ENCODE measurements at regions of chr19 and their contacts with region 1.

Region 1: DNA sequence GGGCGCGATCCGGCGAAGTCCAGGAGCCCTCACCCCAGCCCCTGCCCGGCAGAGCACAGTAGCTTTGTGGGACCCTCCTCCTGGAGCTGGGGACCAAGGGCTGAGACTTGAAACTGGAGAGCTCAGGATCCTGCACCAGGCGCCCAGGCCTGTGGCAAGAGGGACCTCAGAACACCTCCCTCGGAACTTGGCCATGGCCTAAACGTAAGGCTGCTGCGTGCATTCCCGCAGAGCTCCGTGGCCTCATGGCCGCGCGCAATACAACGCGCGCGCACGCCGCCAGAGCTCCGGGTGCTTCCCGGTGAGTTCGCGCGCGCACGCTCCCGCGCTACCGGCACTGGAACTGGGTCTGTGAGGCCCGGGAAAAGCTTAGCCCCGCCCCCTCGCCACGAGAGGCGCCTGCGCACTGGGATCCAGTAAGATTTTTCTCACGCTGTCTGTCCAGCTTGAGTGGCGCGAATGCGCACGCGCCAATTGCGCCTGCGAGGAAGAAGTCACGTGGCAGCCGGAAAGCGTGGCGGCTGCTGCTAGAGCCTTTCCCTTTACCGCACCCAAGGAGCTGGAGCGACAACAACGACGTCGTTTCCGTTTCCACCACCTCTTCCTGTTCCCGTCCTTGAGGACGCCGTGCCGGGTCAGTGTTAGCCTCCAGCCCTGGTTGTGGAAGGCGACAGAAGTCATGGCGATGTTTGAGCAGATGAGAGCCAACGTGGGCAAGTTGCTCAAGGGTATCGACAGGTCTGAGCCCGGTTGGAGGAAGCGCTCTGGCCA is at the start of gene EIF3K:
- DNase-seq: peak; percentile 99
- ATAC-seq: peak; percentile 40
- H3K4me3 ChIP-seq: peak within 1 kb of the TSS; percentile 54 to 95 (median 79)
- H3K4me3 Mint-ChIP-seq: peak within 1 kb of the TSS; percentile 100
- H3K27ac ChIP-seq: peak within 1 kb of the TSS; percentile 88 to 93
- H3K27ac Mint-ChIP-seq: peak within 1 kb of the TSS; percentile 98
- H3K4me1 ChIP-seq: peaks cover 33 to 50% of the 10 kb centered on the region in 2 donors
- H3K4me1 Mint-ChIP-seq: peaks cover 47% of the 10 kb centered on the region
- H3K27me3 ChIP-seq: no peaks in the 10 kb centered on the region
- H3K27me3 Mint-ChIP-seq: no peaks in the 10 kb centered on the region
- CTCF ChIP-seq: no peak
- total RNA-seq, gene EIF3K: 284 and 295 TPM in 2 replicates

Region 2: DNA sequence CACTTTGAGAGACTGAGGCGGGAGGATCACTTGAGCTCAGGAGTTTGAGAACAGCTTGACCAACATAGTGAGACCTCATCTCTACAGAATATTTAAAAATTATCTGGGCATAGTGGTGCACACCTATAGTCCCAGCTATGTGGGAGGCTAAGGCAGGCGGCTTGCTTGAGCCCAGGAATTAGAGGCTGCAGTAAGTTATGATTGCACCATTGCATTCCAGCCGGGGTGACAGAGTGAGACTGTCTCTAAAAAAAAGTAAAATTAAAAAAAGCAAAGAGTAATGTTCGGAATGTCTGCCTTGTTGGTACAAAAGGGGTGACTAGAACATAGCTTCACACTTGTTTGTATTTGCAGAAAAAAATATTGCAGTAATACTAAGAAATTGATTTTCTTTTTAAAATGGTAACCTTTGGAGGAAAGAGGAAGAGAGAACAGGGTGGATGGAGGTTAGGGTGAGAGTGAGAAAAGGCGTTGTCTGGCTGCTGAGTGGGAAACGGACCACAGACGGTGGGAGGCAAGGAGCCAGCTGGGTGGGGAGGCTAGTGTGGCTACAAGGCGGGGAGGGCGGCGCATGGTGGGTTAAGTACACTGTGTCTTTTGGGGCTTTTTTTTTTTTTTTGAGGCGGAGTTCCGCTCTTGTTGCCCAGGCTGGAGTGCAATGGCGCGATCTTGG is 372.8 kb before region 1 on chr19:
- CTCF ChIA-PET with region 1: no interaction called
- POLR2A ChIA-PET with region 1: interaction called, 14 read pairs
- intact Hi-C with region 1: no loop called
- DNase-seq: no peak
- ATAC-seq: no peak
- H3K4me3 ChIP-seq: no peak overlapping the region
- H3K4me3 Mint-ChIP-seq: no peak overlapping the region
- H3K27ac ChIP-seq: no peak overlapping the region
- H3K27ac Mint-ChIP-seq: no peak overlapping the region
- H3K4me1 ChIP-seq: peaks cover 3 to 12% of the 10 kb centered on the region in 2 donors
- H3K4me1 Mint-ChIP-seq: peaks cover 15% of the 10 kb centered on the region
- H3K27me3 ChIP-seq: no peaks in the 10 kb centered on the region
- H3K27me3 Mint-ChIP-seq: no peaks in the 10 kb centered on the region
- CTCF ChIP-seq: no peak

Region 3: GRCh38 chr19:38387550-38388348 is 231.0 kb before region 1 on chr19 and contains the start of gene GGN:
- CTCF ChIA-PET with region 1: interaction called, 3 read pairs
- POLR2A ChIA-PET with region 1: no interaction called
- intact Hi-C with region 1: loop called (anchors 5 kb)
- DNase-seq: peak; percentile 84
- ATAC-seq: peak; percentile 65
- H3K4me3 ChIP-seq: peak within 1 kb of the TSS; percentile 11 to 77 (median 41)
- H3K4me3 Mint-ChIP-seq: peak within 1 kb of the TSS; percentile 97
- H3K27ac ChIP-seq: no peak within 1 kb of the TSS
- H3K27ac Mint-ChIP-seq: peak within 1 kb of the TSS; percentile 75
- H3K4me1 ChIP-seq: peaks cover 36% of the 10 kb centered on the region in 2 donors
- H3K4me1 Mint-ChIP-seq: peaks cover 31% of the 10 kb centered on the region
- H3K27me3 ChIP-seq: peaks cover 0 to 49% (median 21%) of the 10 kb centered on the region in 4 experiments
- H3K27me3 Mint-ChIP-seq: peaks cover 27% of the 10 kb centered on the region
- CTCF ChIP-seq: no peak
- total RNA-seq, gene GGN: 0.34 TPM in 2 replicates

Region 4: GRCh38 chr19:38559428-38560401 is 59.1 kb before region 1 on chr19:
- CTCF ChIA-PET with region 1: interaction called, 5 read pairs
- POLR2A ChIA-PET with region 1: interaction called, 15 read pairs
- intact Hi-C with region 1: loop called (anchors 5 kb)
- DNase-seq: peak; percentile 48
- ATAC-seq: peak; percentile 69
- H3K4me3 ChIP-seq: peak overlapping the region in 1 of 5 experiments; percentile 24
- H3K4me3 Mint-ChIP-seq: peak overlapping the region; percentile 66
- H3K27ac ChIP-seq: peak overlapping the region in 1 of 2 donors; percentile 43
- H3K27ac Mint-ChIP-seq: peak overlapping the region; percentile 92
- H3K4me1 ChIP-seq: peaks cover 8 to 33% of the 10 kb centered on the region in 2 donors
- H3K4me1 Mint-ChIP-seq: peaks cover 50% of the 10 kb centered on the region
- H3K27me3 ChIP-seq: peaks cover 0 to 12% (median 4%) of the 10 kb centered on the region in 4 experiments
- H3K27me3 Mint-ChIP-seq: no peaks in the 10 kb centered on the region
- CTCF ChIP-seq: no peak

Region 5: GRCh38 chr19:38736036-38736412 is 117.2 kb after region 1 on chr19:
- CTCF ChIA-PET with region 1: no interaction called
- POLR2A ChIA-PET with region 1: interaction called, 4 read pairs
- intact Hi-C with region 1: loop called (anchors 2 kb)
- DNase-seq: peak; percentile 87
- ATAC-seq: peak; percentile 53
- H3K4me3 ChIP-seq: peak overlapping the region in 4 of 5 experiments; percentile 32 to 69 (median 58)
- H3K4me3 Mint-ChIP-seq: peak overlapping the region; percentile 79
- H3K27ac ChIP-seq: no peak overlapping the region
- H3K27ac Mint-ChIP-seq: peak overlapping the region; percentile 76
- H3K4me1 ChIP-seq: peaks cover 29 to 47% of the 10 kb centered on the region in 2 donors
- H3K4me1 Mint-ChIP-seq: peaks cover 42% of the 10 kb centered on the region
- H3K27me3 ChIP-seq: no peaks in the 10 kb centered on the region
- H3K27me3 Mint-ChIP-seq: no peaks in the 10 kb centered on the region
- CTCF ChIP-seq: no peak

Region 6: DNA sequence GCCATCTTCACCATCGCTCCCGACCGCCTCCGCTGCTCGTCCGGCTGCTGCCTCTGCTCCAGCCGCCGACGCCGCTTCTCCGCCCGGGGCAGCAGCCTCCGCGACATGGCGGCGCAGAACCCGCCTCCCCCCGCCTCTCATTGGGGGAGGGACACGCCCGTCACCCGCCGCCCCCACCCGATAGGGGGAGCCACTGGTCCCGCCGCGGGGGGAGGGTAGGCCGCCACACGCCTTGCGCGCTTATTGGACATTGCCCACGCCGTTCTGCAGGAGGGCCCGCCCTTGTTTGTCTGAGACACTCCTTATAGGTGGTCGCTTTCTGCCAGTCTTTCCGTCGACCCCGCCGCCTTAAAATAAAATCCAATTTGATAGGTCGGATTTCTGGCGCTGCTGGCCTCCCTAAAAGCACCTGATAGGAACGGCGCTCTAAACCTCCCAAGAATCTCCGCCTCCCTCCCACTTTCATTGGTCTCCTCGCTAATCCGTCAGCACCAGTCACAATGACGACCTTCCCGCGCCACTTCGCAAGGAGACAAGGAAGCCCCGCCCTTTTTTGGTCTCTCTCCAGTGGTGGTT is 231.2 kb after region 1 on chr19 and contains the start of gene HNRNPL:
- CTCF ChIA-PET with region 1: no interaction called
- POLR2A ChIA-PET with region 1: interaction called, 6 read pairs
- intact Hi-C with region 1: loop called (anchors 1 kb)
- DNase-seq: peak; percentile 100
- ATAC-seq: peak; percentile 60
- H3K4me3 ChIP-seq: peak within 1 kb of the TSS; percentile 63 to 95 (median 83)
- H3K4me3 Mint-ChIP-seq: peak within 1 kb of the TSS; percentile 92
- H3K27ac ChIP-seq: peak within 1 kb of the TSS; percentile 82 to 98
- H3K27ac Mint-ChIP-seq: peak within 1 kb of the TSS; percentile 99
- H3K4me1 ChIP-seq: peaks cover 37 to 51% of the 10 kb centered on the region in 2 donors
- H3K4me1 Mint-ChIP-seq: peaks cover 56% of the 10 kb centered on the region
- H3K27me3 ChIP-seq: no peaks in the 10 kb centered on the region
- H3K27me3 Mint-ChIP-seq: no peaks in the 10 kb centered on the region
- CTCF ChIP-seq: peak; percentile 37
- total RNA-seq, gene HNRNPL: 397 and 418 TPM in 2 replicates

Region 7: GRCh38 chr19:39412100-39412866 is 793.5 kb after region 1 on chr19 and contains the start of gene PLEKHG2:
- CTCF ChIA-PET with region 1: no interaction called
- POLR2A ChIA-PET with region 1: no interaction called
- intact Hi-C with region 1: loop called (anchors 5 kb)
- DNase-seq: peak; percentile 99
- ATAC-seq: peak; percentile 53
- H3K4me3 ChIP-seq: peak within 1 kb of the TSS; percentile 74 to 98 (median 92)
- H3K4me3 Mint-ChIP-seq: peak within 1 kb of the TSS; percentile 94
- H3K27ac ChIP-seq: peak within 1 kb of the TSS; percentile 100
- H3K27ac Mint-ChIP-seq: peak within 1 kb of the TSS; percentile 99
- H3K4me1 ChIP-seq: peaks cover 24 to 40% of the 10 kb centered on the region in 2 donors
- H3K4me1 Mint-ChIP-seq: peaks cover 49% of the 10 kb centered on the region
- H3K27me3 ChIP-seq: no peaks in the 10 kb centered on the region
- H3K27me3 Mint-ChIP-seq: no peaks in the 10 kb centered on the region
- CTCF ChIP-seq: no peak
- total RNA-seq, gene PLEKHG2: 154 and 167 TPM in 2 replicates